Naive thymus-derived CD4-positive, alpha-beta T cell (primary cell): ENCODE measurements at regions of chr4 and their contacts with region 1.

Region 1: DNA sequence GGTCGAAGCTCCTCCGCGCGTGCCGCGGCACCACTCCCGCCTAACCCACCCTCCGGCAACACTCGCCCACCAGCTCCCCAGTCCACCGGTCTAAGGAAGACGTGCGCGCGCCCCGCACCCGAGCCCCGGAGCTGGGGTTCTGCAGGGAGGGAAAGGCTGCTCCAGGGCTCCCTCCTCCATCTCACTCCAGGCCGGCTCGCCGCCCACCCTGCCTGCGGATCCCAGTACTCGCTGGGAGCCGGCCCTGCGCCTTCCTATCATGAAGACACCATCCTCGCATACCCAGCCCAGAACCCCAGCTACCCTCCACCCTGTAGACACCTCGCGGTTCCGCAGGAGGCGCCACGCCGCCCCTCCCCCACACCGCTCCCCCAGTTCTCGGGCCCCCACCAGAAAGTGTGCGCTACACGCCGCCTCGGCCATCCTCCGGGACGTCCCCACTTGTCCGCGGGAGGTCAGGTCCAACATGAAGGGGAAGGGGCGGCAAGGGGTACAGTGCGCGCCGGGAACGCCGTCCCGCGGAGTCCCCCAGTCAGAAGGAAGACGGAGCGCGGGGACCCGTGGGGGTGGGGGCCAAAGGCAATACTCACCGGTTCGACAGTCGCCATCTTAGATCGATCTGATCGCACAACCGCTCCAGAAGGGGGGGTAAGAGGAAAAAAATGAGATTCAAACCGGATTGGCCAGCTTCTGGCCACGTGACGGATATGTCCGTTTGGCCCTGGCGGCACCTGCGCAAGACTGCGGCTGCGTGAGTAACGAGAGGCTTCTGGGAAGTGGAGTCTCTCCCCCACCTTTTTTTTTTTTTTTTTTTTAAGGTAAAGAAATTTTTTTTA is at the start of gene EIF4E:
- DNase-seq: peak; percentile 81 to 99 (median 97)
- ATAC-seq: peak; percentile 88
- H3K4me3 ChIP-seq: peak within 1 kb of the TSS; percentile 96
- H3K4me3 Mint-ChIP-seq: peak within 1 kb of the TSS; percentile 91 to 100 (median 96)
- H3K27ac ChIP-seq: peak within 1 kb of the TSS; percentile 88
- H3K27ac Mint-ChIP-seq: peak within 1 kb of the TSS; percentile 88 to 98 (median 97)
- H3K4me1 ChIP-seq: peaks cover 9 to 15% of the 10 kb centered on the region in 2 donors
- H3K4me1 Mint-ChIP-seq: peaks cover 12 to 52% (median 38%) of the 10 kb centered on the region in 7 donors
- H3K27me3 ChIP-seq: no peaks in the 10 kb centered on the region
- H3K27me3 Mint-ChIP-seq: peaks cover 0 to 4% (median 0%) of the 10 kb centered on the region in 5 donors
- total RNA-seq, gene EIF4E: 53.6 to 96.1 (median 63.0) TPM

Region 2: DNA sequence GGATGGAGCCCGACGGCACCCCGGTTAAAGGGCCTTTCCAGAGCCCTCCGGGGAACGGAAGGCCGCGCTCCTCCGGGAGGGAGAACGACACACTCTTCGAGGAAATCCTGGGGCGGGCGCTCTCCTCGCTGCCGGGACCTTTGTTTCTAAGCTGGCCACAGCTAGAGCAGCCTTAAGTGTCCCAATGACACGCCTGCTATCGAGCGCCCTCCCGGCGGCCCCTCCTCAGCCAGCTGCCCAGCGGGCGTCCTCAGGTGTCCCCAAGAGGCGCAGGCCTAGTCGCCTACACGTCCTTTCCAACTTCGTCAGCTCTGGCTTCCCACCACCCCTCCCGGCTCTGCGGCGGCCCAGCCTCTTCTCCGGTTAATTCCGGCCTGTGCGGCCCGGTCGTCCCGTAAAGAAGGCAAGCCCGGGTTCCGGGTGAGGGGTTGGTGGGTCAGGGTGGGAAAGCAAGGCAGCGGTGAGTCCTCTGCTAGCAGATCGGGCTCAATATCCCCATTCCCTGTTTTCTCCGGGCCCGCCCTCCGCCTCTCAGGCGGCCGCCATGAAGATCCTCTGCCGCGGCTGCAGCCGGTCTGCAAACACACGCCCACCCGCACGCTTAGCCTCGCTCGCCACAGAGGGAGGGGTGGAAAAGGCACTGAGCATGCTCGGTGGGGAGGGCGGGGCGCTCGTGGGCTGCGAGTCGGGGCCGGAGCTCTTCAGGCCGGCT is 668.0 kb before region 1 on chr4:
- CTCF ChIA-PET with region 1: no interaction called
- POLR2A ChIA-PET with region 1: interaction called, 4 read pairs
- intact Hi-C with region 1: loop called (anchors 1 kb)
- DNase-seq: peak in 6 of 9 donors; percentile 69 to 95 (median 78)
- ATAC-seq: peak; percentile 85
- H3K4me3 ChIP-seq: peak overlapping the region; percentile 90
- H3K4me3 Mint-ChIP-seq: peak overlapping the region; percentile 92 to 98 (median 94)
- H3K27ac ChIP-seq: peak overlapping the region; percentile 86
- H3K27ac Mint-ChIP-seq: peak overlapping the region; percentile 84 to 97 (median 92)
- H3K4me1 ChIP-seq: peaks cover 5 to 12% of the 10 kb centered on the region in 2 donors
- H3K4me1 Mint-ChIP-seq: peaks cover 31 to 60% (median 54%) of the 10 kb centered on the region in 7 donors
- H3K27me3 ChIP-seq: no peaks in the 10 kb centered on the region
- H3K27me3 Mint-ChIP-seq: no peaks in the 10 kb centered on the region

Region 3: GRCh38 chr4:98601708-98602107 is 327.0 kb before region 1 on chr4:
- CTCF ChIA-PET with region 1: no interaction called
- POLR2A ChIA-PET with region 1: no interaction called
- intact Hi-C with region 1: loop called in 1 of 2 experiments (anchors 5 kb)
- DNase-seq: no peak
- ATAC-seq: no peak
- H3K4me3 ChIP-seq: no peak overlapping the region
- H3K4me3 Mint-ChIP-seq: peak overlapping the region in 7 of 10 donors; percentile 1 to 70 (median 29)
- H3K27ac ChIP-seq: no peak overlapping the region
- H3K27ac Mint-ChIP-seq: peak overlapping the region in 6 of 9 donors; percentile 0 to 50 (median 18)
- H3K4me1 ChIP-seq: peaks cover 0 to 27% of the 10 kb centered on the region in 2 donors
- H3K4me1 Mint-ChIP-seq: peaks cover 18 to 47% (median 44%) of the 10 kb centered on the region in 7 donors
- H3K27me3 ChIP-seq: no peaks in the 10 kb centered on the region
- H3K27me3 Mint-ChIP-seq: no peaks in the 10 kb centered on the region

Region 4: GRCh38 chr4:99054428-99054994 is 125.8 kb after region 1 on chr4:
- CTCF ChIA-PET with region 1: interaction called, 3 read pairs
- POLR2A ChIA-PET with region 1: no interaction called
- intact Hi-C with region 1: loop called (anchors 1 to 2 kb)
- DNase-seq: no peak
- ATAC-seq: no peak
- H3K4me3 ChIP-seq: no peak overlapping the region
- H3K4me3 Mint-ChIP-seq: peak overlapping the region in 1 of 10 donors; percentile 16
- H3K27ac ChIP-seq: no peak overlapping the region
- H3K27ac Mint-ChIP-seq: peak overlapping the region in 8 of 9 donors; percentile 23 to 83 (median 34)
- H3K4me1 ChIP-seq: peaks cover 4 to 6% of the 10 kb centered on the region in 2 donors
- H3K4me1 Mint-ChIP-seq: peaks cover 7 to 42% (median 13%) of the 10 kb centered on the region in 7 donors
- H3K27me3 ChIP-seq: no peaks in the 10 kb centered on the region
- H3K27me3 Mint-ChIP-seq: no peaks in the 10 kb centered on the region

Region 5: DNA sequence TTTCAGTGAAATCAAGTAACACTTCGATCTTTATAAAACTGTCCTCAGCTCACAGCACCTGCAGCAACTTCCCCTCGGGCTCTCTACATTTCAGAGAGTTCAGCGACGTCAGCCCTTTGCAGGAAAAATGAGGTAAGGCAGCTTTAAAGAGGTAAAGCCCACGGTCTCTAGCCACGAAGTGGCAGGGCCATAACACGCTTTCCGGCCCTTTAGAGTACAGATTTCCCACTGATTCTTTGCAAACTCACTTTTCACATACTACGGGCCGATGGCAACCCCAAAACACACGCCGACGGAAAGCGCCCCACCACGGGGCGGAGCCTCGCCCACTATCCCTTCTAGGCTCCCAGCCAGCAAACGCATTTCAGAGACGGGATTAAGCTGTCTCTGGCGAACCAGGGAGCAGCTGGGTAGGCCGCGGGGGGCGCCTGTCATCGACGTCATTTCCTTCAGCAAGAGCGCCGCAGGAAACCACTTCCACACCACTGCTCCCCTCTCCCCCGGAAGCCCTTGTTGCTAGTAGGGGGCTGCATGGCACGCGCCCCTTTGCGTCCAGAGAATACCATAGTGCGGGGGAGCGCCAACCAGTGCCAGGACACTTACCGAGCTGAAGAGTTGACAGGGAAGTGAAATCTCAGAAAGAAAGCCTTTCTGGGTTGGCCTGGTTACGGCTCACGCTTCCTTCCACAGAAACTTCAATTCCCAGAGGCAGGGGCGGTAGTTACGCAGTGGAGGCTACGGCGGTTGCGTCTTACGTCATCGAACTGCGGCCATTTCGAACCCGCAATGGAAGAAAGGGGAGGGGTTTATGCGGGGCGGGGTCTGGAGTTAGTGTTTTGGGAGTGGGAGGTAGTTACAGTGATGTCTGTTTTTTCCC is 634.8 kb after region 1 on chr4 and contains the start of gene TRMT10A:
- CTCF ChIA-PET with region 1: no interaction called
- POLR2A ChIA-PET with region 1: no interaction called
- intact Hi-C with region 1: loop called (anchors 1 kb)
- DNase-seq: peak; percentile 79 to 98 (median 98)
- ATAC-seq: peak; percentile 91
- H3K4me3 ChIP-seq: peak within 1 kb of the TSS; percentile 92
- H3K4me3 Mint-ChIP-seq: peak within 1 kb of the TSS; percentile 77 to 99 (median 98)
- H3K27ac ChIP-seq: peak within 1 kb of the TSS; percentile 91
- H3K27ac Mint-ChIP-seq: peak within 1 kb of the TSS; percentile 98 to 100 (median 100)
- H3K4me1 ChIP-seq: no peaks in the 10 kb centered on the region
- H3K4me1 Mint-ChIP-seq: peaks cover 0 to 33% (median 28%) of the 10 kb centered on the region in 7 donors
- H3K27me3 ChIP-seq: no peaks in the 10 kb centered on the region
- H3K27me3 Mint-ChIP-seq: peaks cover 13 to 29% (median 23%) of the 10 kb centered on the region in 5 donors
- total RNA-seq, gene TRMT10A: 3.9 to 9.1 (median 7.7) TPM

Region 6: GRCh38 chr4:99857307-99857706 is 928.6 kb after region 1 on chr4:
- CTCF ChIA-PET with region 1: no interaction called
- POLR2A ChIA-PET with region 1: no interaction called
- intact Hi-C with region 1: no loop called
- DNase-seq: no peak
- ATAC-seq: no peak
- H3K4me3 ChIP-seq: no peak overlapping the region
- H3K4me3 Mint-ChIP-seq: peak overlapping the region in 1 of 10 donors; percentile 12
- H3K27ac ChIP-seq: no peak overlapping the region
- H3K27ac Mint-ChIP-seq: peak overlapping the region in 4 of 9 donors; percentile 5 to 91 (median 44)
- H3K4me1 ChIP-seq: peaks cover 0 to 9% of the 10 kb centered on the region in 2 donors
- H3K4me1 Mint-ChIP-seq: peaks cover 16 to 74% (median 26%) of the 10 kb centered on the region in 7 donors
- H3K27me3 ChIP-seq: no peaks in the 10 kb centered on the region
- H3K27me3 Mint-ChIP-seq: no peaks in the 10 kb centered on the region